ENCODE measurements at regions of chr1 and their contacts with region 1.

Region 1: GRCh38 chr1:225977937-225978748 is 21.0 kb downstream of the SDE2 start:
- DNase-seq: no peak
- H3K4me3 ChIP-seq: no peak overlapping the region
- H3K27ac ChIP-seq: no peak overlapping the region
- H3K4me1 ChIP-seq: no peaks in the 10 kb centered on the region
- H3K27me3 ChIP-seq: no peaks in the 10 kb centered on the region
- CTCF ChIP-seq: no peak
- POLR2A ChIP-seq: no peak

Region 2: DNA sequence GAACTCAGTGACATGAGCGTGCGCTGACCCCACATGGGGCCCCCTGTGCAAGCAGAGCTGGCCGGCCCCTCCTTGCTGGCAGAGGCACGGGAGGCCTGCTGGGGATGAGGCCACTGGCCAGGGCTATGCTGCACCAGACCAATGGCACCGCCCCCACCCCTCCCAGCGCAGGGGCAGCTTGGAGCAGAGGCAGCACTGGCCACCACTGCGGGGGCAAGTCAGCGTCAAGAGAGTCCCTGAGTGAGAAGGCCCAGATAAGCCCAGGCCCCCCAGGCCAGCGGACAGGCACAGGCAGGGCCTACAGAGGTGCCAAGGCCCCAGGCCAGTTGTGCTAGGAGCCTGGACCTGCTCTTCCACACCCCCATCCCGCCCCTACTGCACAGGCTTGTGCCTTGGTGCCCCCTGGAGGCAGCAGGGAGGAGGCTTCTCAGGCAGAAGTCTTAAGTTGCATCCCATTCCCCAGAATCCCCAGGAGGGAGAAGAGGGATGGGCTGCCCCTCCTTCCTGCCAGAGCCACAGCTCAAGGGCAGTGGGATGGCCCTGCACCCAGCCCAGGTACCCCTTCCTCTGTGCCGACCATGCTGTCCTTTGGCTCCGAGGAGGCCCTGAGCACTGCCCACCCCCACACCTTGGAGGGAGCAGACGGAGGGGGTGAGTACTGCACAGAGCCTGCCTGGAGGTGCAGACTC is 132.4 kb before region 1 on chr1:
- intact Hi-C with region 1: loop called (anchors 10 kb)
- DNase-seq: peak in 1 of 2 donors; percentile 90
- H3K4me3 ChIP-seq: no peak overlapping the region
- H3K27ac ChIP-seq: peak overlapping the region; percentile 60
- H3K4me1 ChIP-seq: peaks cover 24% of the 10 kb centered on the region
- H3K27me3 ChIP-seq: no peaks in the 10 kb centered on the region
- CTCF ChIP-seq: peak; percentile 45 to 76 (median 46)
- POLR2A ChIP-seq: no peak

Region 3: GRCh38 chr1:225899044-225899925 is 78.9 kb before region 1 on chr1:
- intact Hi-C with region 1: no loop called
- DNase-seq: no peak
- H3K4me3 ChIP-seq: no peak overlapping the region
- H3K27ac ChIP-seq: no peak overlapping the region
- H3K4me1 ChIP-seq: no peaks in the 10 kb centered on the region
- H3K27me3 ChIP-seq: no peaks in the 10 kb centered on the region
- CTCF ChIP-seq: no peak
- POLR2A ChIP-seq: no peak

Region 4: DNA sequence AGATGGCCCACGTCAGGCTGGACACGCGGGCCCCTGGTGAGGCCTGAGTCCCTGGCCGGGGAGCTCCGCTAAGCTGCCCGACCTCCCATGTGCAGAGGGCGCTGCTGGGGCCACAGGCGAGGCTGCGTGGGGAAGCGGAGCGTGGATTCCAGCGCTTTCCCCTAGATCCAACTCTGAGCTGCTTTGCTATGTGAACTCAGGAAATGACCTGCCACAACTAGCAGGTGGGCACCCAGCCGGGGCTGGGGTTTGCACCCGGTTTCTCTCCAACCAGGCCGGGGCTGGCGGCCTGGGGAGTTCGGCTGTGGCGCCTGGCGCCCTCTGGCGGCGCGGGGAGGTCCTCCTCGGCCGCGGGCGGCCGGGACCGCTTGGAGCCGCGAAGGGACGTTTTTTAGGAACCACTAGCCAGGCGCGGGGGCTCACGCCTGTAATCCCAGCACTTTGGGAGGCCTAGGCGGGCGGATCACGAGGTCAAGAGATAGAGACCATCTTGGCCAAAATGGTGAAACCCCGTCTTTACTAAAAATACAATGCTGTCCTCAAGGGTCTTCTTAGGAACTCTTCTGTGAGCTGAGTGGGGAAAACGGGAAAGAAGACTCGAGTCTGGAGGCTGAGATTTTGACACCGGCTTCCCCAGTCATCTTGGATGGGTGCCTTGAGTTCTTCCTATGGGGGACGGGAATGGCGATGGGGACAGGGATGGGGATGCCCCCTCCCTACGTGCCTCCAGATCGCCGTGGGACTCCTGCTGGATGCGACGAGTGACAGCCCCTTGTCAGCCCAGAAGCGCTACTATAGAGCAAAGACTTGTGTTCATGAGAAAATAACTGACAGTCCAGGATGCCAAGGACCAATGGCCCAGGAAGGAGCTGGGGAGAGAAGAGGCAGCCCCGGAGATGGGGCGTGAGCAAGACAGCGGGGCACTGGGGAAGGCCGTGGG is 66.7 kb before region 1 on chr1:
- intact Hi-C with region 1: loop called (anchors 10 kb)
- DNase-seq: no peak
- H3K4me3 ChIP-seq: no peak overlapping the region
- H3K27ac ChIP-seq: no peak overlapping the region
- H3K4me1 ChIP-seq: no peaks in the 10 kb centered on the region
- H3K27me3 ChIP-seq: no peaks in the 10 kb centered on the region
- CTCF ChIP-seq: peak; percentile 72 to 81 (median 80)
- POLR2A ChIP-seq: no peak

Region 5: GRCh38 chr1:226109829-226110248 is 131.7 kb after region 1 on chr1:
- intact Hi-C with region 1: no loop called
- DNase-seq: no peak
- H3K4me3 ChIP-seq: peak overlapping the region; percentile 71 to 80
- H3K27ac ChIP-seq: peak overlapping the region; percentile 95
- H3K4me1 ChIP-seq: peaks cover 20% of the 10 kb centered on the region
- H3K27me3 ChIP-seq: no peaks in the 10 kb centered on the region
- CTCF ChIP-seq: no peak
- POLR2A ChIP-seq: peak in 1 of 2 donors; percentile 9

Region 6: GRCh38 chr1:226236826-226237225 is 258.7 kb after region 1 on chr1:
- intact Hi-C with region 1: no loop called
- DNase-seq: no peak
- H3K4me3 ChIP-seq: no peak overlapping the region
- H3K27ac ChIP-seq: no peak overlapping the region
- H3K4me1 ChIP-seq: no peaks in the 10 kb centered on the region
- H3K27me3 ChIP-seq: no peaks in the 10 kb centered on the region
- CTCF ChIP-seq: no peak
- POLR2A ChIP-seq: no peak